BJ (cell line): ENCODE measurements at regions of chr11 and their contacts with region 1.

Region 1: GRCh38 chr11:2532704-2533586 is 88.1 kb downstream of the KCNQ1 start:
- DNase-seq: peak; percentile 13
- H3K4me3 ChIP-seq: no peak overlapping the region
- H3K27me3 ChIP-seq: peaks cover 2% of the 10 kb centered on the region; the same call in 1 of the 2 replicates
- CTCF ChIP-seq: peak; percentile 96

Region 2: GRCh38 chr11:2305140-2305840 is 227.7 kb before region 1 on chr11:
- CTCF ChIA-PET with region 1: interaction called, 44 read pairs
- POLR2A ChIA-PET with region 1: interaction called, 7 read pairs
- DNase-seq: no peak
- H3K4me3 ChIP-seq: no peak overlapping the region
- H3K27me3 ChIP-seq: no peaks in the 10 kb centered on the region
- CTCF ChIP-seq: peak; percentile 97

Region 3: GRCh38 chr11:2509481-2510001 is 23.4 kb before region 1 on chr11:
- CTCF ChIA-PET with region 1: interaction called, 11 read pairs
- POLR2A ChIA-PET with region 1: no interaction called
- DNase-seq: no peak
- H3K4me3 ChIP-seq: no peak overlapping the region
- H3K27me3 ChIP-seq: no peaks in the 10 kb centered on the region; the same call in 1 of the 2 replicates
- CTCF ChIP-seq: no peak

Region 4: GRCh38 chr11:2581151-2581930 is 48.4 kb after region 1 on chr11:
- CTCF ChIA-PET with region 1: no interaction called
- POLR2A ChIA-PET with region 1: no interaction called
- DNase-seq: no peak
- H3K4me3 ChIP-seq: no peak overlapping the region
- H3K27me3 ChIP-seq: no peaks in the 10 kb centered on the region; the same call in 1 of the 2 replicates
- CTCF ChIP-seq: no peak

Region 5: DNA sequence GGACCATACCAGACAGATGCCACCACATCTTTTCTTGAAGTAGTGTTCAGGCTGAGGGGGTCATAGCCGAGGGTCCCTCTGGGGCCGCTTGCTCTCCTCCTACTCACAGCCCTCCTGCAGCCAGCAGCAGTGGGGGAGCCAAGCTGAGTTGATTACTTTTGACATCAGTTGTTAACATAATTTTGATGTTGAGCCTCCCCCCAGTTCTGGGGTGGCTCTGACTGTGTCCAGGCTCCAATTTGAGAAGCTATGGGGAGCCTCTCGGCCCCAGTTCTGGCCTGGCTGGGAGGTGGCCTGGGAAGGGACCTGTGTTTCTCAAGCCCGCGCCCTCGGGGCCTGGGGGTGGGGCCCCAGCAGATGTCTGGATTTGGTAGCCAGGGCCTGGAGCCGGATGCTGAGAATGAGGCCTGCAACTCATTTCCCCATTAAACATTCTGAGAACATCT is 118.9 kb after region 1 on chr11:
- CTCF ChIA-PET with region 1: no interaction called
- POLR2A ChIA-PET with region 1: no interaction called
- DNase-seq: no peak
- H3K4me3 ChIP-seq: no peak overlapping the region
- H3K27me3 ChIP-seq: no peaks in the 10 kb centered on the region
- CTCF ChIP-seq: no peak

Region 6: GRCh38 chr11:2667581-2668339 is 134.8 kb after region 1 on chr11:
- CTCF ChIA-PET with region 1: no interaction called
- POLR2A ChIA-PET with region 1: no interaction called
- DNase-seq: no peak
- H3K4me3 ChIP-seq: no peak overlapping the region
- H3K27me3 ChIP-seq: no peaks in the 10 kb centered on the region; the same call in 1 of the 2 replicates
- CTCF ChIP-seq: no peak

Region 7: DNA sequence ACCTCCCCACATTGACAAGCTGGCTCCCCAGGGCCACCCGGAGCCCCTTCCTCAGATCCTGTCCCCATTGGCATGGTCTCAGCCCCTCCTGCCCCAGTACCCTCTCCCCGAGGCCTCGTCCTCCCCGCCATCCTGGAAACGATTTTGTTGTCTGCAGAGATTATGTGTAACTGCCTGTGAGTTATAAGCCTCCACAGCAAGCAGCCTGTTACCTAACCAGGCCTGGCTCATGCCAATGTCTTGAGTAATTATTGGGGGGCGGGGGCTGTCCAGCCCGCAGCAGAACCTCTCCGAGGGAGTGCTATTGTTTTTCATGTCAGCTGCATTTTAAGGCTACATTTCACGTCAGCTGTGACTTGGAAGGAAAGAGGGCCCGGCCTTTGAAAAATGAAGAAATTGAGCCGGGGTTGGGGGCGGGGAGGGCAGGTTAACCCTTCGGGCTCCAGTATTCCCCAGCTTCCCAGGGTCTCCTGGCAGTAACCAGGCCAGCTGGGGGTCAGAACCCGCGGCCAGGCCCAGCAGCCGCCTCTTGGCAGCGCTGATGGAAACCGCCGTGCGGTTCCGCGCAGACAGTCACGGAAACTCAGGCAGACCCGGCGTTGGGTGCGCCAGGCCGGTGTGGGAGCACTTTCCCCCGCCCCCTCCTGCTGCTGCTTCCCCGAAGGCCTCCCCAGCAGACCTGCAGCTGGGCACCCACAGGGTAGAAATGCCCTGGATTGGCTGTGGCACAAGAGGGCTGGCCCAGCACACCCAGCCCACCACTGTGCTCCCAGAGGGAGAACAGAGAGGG is 293.1 kb after region 1 on chr11:
- CTCF ChIA-PET with region 1: interaction called, 12 read pairs
- POLR2A ChIA-PET with region 1: no interaction called
- DNase-seq: peak; percentile 88
- H3K4me3 ChIP-seq: no peak overlapping the region
- H3K27me3 ChIP-seq: no peaks in the 10 kb centered on the region
- CTCF ChIP-seq: no peak

Region 8: GRCh38 chr11:2901854-2902783 is 369.2 kb after region 1 on chr11:
- CTCF ChIA-PET with region 1: interaction called, 11 read pairs
- POLR2A ChIA-PET with region 1: no interaction called
- DNase-seq: peak; percentile 58
- H3K4me3 ChIP-seq: peak overlapping the region; percentile 88
- H3K27me3 ChIP-seq: no peaks in the 10 kb centered on the region
- CTCF ChIP-seq: 0 out of 2 replicates have a peak, but pooled peaks have one; percentile 8

Region 9: DNA sequence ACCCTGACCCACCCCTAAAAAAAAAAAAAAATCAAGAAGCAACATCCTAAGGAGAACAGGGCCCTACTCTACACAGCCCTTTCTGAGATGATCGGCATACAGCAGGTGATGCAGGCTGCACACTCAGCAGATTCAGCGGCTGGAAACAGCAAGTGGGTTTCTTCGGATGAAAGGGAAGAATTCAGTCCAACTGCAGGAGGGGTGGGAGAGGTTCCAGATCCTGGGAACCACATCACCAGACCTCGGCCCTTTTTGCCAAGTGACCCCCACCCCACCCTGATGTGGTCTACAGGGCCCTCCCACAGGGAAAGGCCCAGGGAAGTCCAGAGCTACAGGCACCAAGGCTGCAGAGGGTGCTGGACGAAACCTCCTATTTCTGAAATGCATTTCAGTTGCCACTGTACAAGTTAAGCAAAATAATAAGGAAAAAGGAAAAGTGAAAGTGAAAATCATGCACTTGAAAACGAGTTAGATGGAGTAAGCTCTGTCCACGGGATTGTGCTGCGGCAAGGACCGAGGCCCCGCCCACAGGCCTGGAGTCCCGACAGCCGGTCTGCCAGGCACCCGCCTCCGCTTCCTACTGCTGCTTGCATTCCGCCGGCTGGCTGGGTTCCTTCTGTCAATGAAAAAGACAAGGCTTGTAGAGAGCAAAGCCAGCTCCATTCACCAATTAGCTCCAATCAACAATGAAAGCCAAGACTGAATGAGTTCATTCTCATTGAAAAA is 412.2 kb after region 1 on chr11:
- CTCF ChIA-PET with region 1: interaction called, 11 read pairs
- POLR2A ChIA-PET with region 1: interaction called, 4 read pairs
- DNase-seq: peak; percentile 54
- H3K4me3 ChIP-seq: 0 out of 2 replicates have a peak overlapping the region, but pooled peaks have one; percentile 21
- H3K27me3 ChIP-seq: no peaks in the 10 kb centered on the region
- CTCF ChIP-seq: no peak